Transverse colon (tissue), 4 donors: ENCODE measurements at regions of chr4 and their contacts with region 1.

Region 1: GRCh38 chr4:135136712-135137111 is 935.1 kb upstream of the PABPC4L start:
- DNase-seq: no peak
- H3K4me3 ChIP-seq: no peak overlapping the region
- H3K27ac ChIP-seq: no peak overlapping the region
- H3K4me1 ChIP-seq: no peaks in the 10 kb centered on the region
- H3K27me3 ChIP-seq: no peaks in the 10 kb centered on the region
- CTCF ChIP-seq: no peak
- EP300 ChIP-seq: no peak
- POLR2A ChIP-seq: no peak

Region 2: GRCh38 chr4:134740290-134740689 is 396.4 kb before region 1 on chr4:
- in situ Hi-C with region 1: no loop called
- intact Hi-C with region 1: no loop called
- DNase-seq: no peak
- H3K4me3 ChIP-seq: no peak overlapping the region
- H3K27ac ChIP-seq: no peak overlapping the region
- H3K4me1 ChIP-seq: no peaks in the 10 kb centered on the region
- H3K27me3 ChIP-seq: no peaks in the 10 kb centered on the region
- CTCF ChIP-seq: no peak
- EP300 ChIP-seq: no peak
- POLR2A ChIP-seq: no peak

Region 3: GRCh38 chr4:134906404-134907023 is 230.2 kb before region 1 on chr4:
- in situ Hi-C with region 1: no loop called
- intact Hi-C with region 1: no loop called
- DNase-seq: no peak
- H3K4me3 ChIP-seq: no peak overlapping the region
- H3K27ac ChIP-seq: no peak overlapping the region
- H3K4me1 ChIP-seq: no peaks in the 10 kb centered on the region
- H3K27me3 ChIP-seq: no peaks in the 10 kb centered on the region
- CTCF ChIP-seq: peak in 2 of 5 experiments; percentile 9 to 22
- EP300 ChIP-seq: no peak
- POLR2A ChIP-seq: no peak

Region 4: DNA sequence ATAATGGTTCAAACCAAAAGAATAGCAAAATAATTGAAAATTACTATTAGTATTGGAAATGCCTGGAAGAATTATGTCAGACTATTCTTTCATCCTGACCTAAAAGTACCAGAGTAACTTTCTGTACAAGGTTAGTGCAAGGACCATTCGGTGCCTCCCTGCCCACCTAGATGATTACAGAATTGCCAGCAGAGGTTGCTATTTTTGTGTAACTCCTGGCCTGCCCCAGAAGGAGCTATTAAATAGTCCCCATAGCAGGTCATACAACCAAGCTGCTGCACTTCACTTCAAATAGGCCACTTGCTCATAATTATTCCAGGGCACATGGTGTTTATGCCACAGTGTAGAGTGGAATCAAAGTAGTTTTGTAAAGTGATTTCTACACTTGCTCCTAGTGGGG is 104.0 kb before region 1 on chr4:
- in situ Hi-C with region 1: loop called in 1 of 4 experiments (anchors 25 kb)
- intact Hi-C with region 1: no loop called
- DNase-seq: no peak
- H3K4me3 ChIP-seq: no peak overlapping the region
- H3K27ac ChIP-seq: no peak overlapping the region
- H3K4me1 ChIP-seq: no peaks in the 10 kb centered on the region
- H3K27me3 ChIP-seq: no peaks in the 10 kb centered on the region
- CTCF ChIP-seq: no peak
- EP300 ChIP-seq: no peak
- POLR2A ChIP-seq: no peak